BJ (cell line): ENCODE measurements at regions of chr6 and their contacts with region 1.

Region 1: DNA sequence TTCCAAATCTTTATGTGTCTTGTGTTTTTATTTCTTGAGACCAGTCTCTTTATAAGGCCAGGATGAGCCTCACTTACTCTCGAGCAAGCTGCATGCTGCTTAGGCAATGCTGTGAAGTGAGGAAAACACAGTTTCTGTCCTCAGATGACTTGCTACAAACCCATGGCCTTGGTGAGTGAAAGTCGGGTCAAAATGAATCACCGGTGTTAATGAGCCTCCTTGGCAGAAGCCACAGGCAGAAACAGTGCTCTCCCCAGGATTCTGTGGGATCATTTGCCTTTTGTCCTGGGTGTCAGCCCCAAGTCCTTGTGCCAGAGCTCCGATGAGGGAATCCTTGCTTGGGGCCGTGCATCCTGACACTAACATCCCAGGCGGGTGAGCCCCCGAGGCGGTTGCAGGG is 482.5 kb downstream of the QKI start:
- DNase-seq: peak; percentile 8
- H3K4me3 ChIP-seq: no peak overlapping the region
- H3K27me3 ChIP-seq: no peaks in the 10 kb centered on the region
- CTCF ChIP-seq: no peak

Region 2: DNA sequence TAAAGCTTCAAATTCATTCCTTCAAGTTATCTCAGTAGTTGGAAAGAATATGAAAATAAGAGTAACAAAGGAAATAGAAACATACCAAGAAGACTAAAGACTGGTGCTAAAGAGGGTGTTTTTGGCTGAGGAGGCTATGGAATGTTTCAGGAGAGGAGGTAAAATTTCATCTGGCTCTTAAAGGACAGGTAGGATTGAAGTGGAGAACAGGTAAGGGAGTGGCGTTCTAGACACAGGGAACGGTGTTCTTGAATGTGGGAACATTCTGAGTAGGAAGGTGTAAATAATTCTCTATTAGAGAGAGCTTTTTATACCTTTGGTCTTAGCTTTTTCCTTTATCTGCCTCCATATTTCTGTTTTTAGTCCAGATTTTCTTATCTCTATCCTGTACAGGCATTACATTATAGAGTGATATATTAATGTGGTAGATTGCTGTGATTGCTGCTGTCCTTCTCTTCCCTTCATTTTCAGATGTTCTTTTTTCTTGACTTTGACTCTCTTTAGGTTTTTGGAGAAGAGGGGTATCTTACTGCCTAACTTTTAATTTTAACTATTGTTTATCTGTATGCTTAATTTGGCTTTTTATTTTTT is 467.1 kb before region 1 on chr6:
- CTCF ChIA-PET with region 1: no interaction called
- POLR2A ChIA-PET with region 1: interaction called, 15 read pairs
- DNase-seq: no peak
- H3K4me3 ChIP-seq: no peak overlapping the region
- H3K27me3 ChIP-seq: no peaks in the 10 kb centered on the region
- CTCF ChIP-seq: no peak

Region 3: GRCh38 chr6:164168595-164168994 is 271.6 kb after region 1 on chr6:
- CTCF ChIA-PET with region 1: no interaction called
- POLR2A ChIA-PET with region 1: no interaction called
- DNase-seq: no peak
- H3K4me3 ChIP-seq: no peak overlapping the region
- H3K27me3 ChIP-seq: no peaks in the 10 kb centered on the region
- CTCF ChIP-seq: no peak